PC-9 (cell line): ENCODE measurements at regions of chr5 and their contacts with region 1.

Region 1: GRCh38 chr5:169695919-169696490 is 58.9 kb downstream of the DOCK2 start:
- DNase-seq: peak; percentile 28 to 82
- H3K4me3 ChIP-seq: peak overlapping the region; percentile 21; the same call in 1 of the 2 replicates
- H3K27ac ChIP-seq: peak overlapping the region; percentile 57
- H3K4me1 ChIP-seq: peaks cover 32% of the 10 kb centered on the region
- H3K27me3 ChIP-seq: no peaks in the 10 kb centered on the region
- CTCF ChIP-seq: no peak

Region 2: GRCh38 chr5:170411100-170411499 is 715.1 kb after region 1 on chr5:
- CTCF ChIA-PET with region 1: no interaction called
- POLR2A ChIA-PET with region 1: no interaction called
- intact Hi-C with region 1: loop called (anchors 10 kb)
- DNase-seq: no peak
- H3K4me3 ChIP-seq: no peak overlapping the region
- H3K27ac ChIP-seq: no peak overlapping the region
- H3K4me1 ChIP-seq: no peaks in the 10 kb centered on the region
- H3K27me3 ChIP-seq: no peaks in the 10 kb centered on the region; the same call in 1 of the 2 replicates
- CTCF ChIP-seq: peak; percentile 45